IMR-90 (cell line): ENCODE measurements at regions of chr6 and their contacts with region 1.

Region 1: DNA sequence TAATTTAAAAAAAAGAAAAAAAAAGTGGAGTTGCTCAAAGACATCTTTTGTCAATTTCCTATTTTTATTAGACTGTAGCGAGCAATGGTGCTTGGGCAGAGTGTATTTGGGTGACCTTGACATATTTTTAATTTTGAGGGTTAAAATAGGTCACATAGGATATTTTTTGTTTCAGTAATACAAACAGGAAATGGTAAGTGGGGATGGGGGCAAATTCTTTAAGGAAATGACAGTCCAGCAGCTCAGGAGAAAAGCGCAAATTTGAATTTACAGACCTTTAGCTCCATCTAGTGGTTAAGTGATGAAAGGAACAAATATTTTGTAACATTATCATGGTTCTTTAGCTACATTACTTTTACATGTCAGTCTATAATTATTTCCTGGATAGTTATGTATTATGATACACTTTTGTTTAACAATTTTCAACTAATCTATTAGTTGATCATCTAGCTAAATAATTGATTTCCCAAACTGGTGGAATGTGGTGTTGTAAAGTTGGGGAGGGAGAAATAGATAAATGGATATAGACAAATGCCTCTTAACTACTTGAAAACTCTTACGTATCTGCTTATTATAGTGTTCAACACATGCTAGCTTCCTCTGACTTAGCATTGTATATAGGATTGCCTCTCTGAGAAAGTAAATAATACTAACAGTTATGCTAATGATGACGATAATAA is 10.0 kb downstream of the CITED2 start:
- DNase-seq: peak; percentile 63
- ATAC-seq: peak; percentile 60; the same call in 1 of the 2 replicates
- H3K4me3 ChIP-seq: no peak overlapping the region
- H3K27ac ChIP-seq: no peak overlapping the region
- H3K4me1 ChIP-seq: peaks cover 5% of the 10 kb centered on the region
- H3K27me3 ChIP-seq: no peaks in the 10 kb centered on the region
- CTCF ChIP-seq: peak; percentile 79
- POLR2A ChIP-seq: no peak
- RAD21 ChIP-seq: peak; percentile 92

Region 2: GRCh38 chr6:138692058-138692977 is 672.1 kb before region 1 on chr6:
- CTCF ChIA-PET with region 1: no interaction called
- POLR2A ChIA-PET with region 1: no interaction called
- dilution Hi-C with region 1: no loop called
- in situ Hi-C with region 1: no loop called
- intact Hi-C with region 1: loop called (anchors 2 kb)
- DNase-seq: peak; percentile 50
- ATAC-seq: peak; percentile 79
- H3K4me3 ChIP-seq: peak overlapping the region; percentile 88
- H3K27ac ChIP-seq: peak overlapping the region; percentile 65
- H3K4me1 ChIP-seq: no peaks in the 10 kb centered on the region
- H3K27me3 ChIP-seq: no peaks in the 10 kb centered on the region
- CTCF ChIP-seq: peak; percentile 75
- POLR2A ChIP-seq: no peak
- RAD21 ChIP-seq: peak; percentile 40

Region 3: GRCh38 chr6:138987640-138988468 is 376.6 kb before region 1 on chr6 and contains the start of gene REPS1:
- CTCF ChIA-PET with region 1: no interaction called
- POLR2A ChIA-PET with region 1: no interaction called
- dilution Hi-C with region 1: no loop called
- in situ Hi-C with region 1: no loop called
- intact Hi-C with region 1: loop called (anchors 2 kb)
- DNase-seq: peak; percentile 82
- ATAC-seq: peak; percentile 95
- H3K4me3 ChIP-seq: peak within 1 kb of the TSS; percentile 78
- H3K27ac ChIP-seq: peak within 1 kb of the TSS; percentile 92
- H3K4me1 ChIP-seq: peaks cover 2% of the 10 kb centered on the region; the same call in 1 of the 2 replicates
- H3K27me3 ChIP-seq: no peaks in the 10 kb centered on the region; the same call in 1 of the 2 replicates
- CTCF ChIP-seq: peak; percentile 94
- POLR2A ChIP-seq: peak; percentile 85
- RAD21 ChIP-seq: peak; percentile 79
- total RNA-seq, gene REPS1: 21.1 and 21.9 TPM in 2 replicates

Region 4: GRCh38 chr6:139134817-139135581 is 229.4 kb before region 1 on chr6 and contains the start of gene HECA:
- CTCF ChIA-PET with region 1: no interaction called
- POLR2A ChIA-PET with region 1: no interaction called
- dilution Hi-C with region 1: no loop called
- in situ Hi-C with region 1: no loop called
- intact Hi-C with region 1: loop called (anchors 5 kb)
- DNase-seq: peak; percentile 94
- ATAC-seq: peak; percentile 93
- H3K4me3 ChIP-seq: peak within 1 kb of the TSS; percentile 75
- H3K27ac ChIP-seq: peak within 1 kb of the TSS; percentile 24; the same call in 1 of the 2 replicates
- H3K4me1 ChIP-seq: peaks cover 1% of the 10 kb centered on the region; the same call in 1 of the 2 replicates
- H3K27me3 ChIP-seq: no peaks in the 10 kb centered on the region; the same call in 1 of the 2 replicates
- CTCF ChIP-seq: no peak
- POLR2A ChIP-seq: peak; percentile 68; the same call in 1 of the 2 replicates
- RAD21 ChIP-seq: no peak
- total RNA-seq, gene HECA: 4.3 and 7.2 TPM in 2 replicates

Region 5: GRCh38 chr6:139230391-139230840 is 134.0 kb before region 1 on chr6:
- CTCF ChIA-PET with region 1: interaction called, 9 read pairs
- POLR2A ChIA-PET with region 1: no interaction called
- dilution Hi-C with region 1: no loop called
- in situ Hi-C with region 1: loop called (anchors 5 kb)
- intact Hi-C with region 1: loop called (anchors 1 kb)
- DNase-seq: peak; percentile 46
- ATAC-seq: peak; percentile 80
- H3K4me3 ChIP-seq: no peak overlapping the region
- H3K27ac ChIP-seq: no peak overlapping the region
- H3K4me1 ChIP-seq: peaks cover 2% of the 10 kb centered on the region; the same call in 1 of the 2 replicates
- H3K27me3 ChIP-seq: no peaks in the 10 kb centered on the region
- CTCF ChIP-seq: peak; percentile 25; the same call in 1 of the 2 replicates
- POLR2A ChIP-seq: no peak
- RAD21 ChIP-seq: peak; percentile 31; the same call in 1 of the 2 replicates